Dorsolateral prefrontal cortex (tissue), 120 donors: ENCODE measurements at regions of chr17 and their contacts with region 1.

Region 1: DNA sequence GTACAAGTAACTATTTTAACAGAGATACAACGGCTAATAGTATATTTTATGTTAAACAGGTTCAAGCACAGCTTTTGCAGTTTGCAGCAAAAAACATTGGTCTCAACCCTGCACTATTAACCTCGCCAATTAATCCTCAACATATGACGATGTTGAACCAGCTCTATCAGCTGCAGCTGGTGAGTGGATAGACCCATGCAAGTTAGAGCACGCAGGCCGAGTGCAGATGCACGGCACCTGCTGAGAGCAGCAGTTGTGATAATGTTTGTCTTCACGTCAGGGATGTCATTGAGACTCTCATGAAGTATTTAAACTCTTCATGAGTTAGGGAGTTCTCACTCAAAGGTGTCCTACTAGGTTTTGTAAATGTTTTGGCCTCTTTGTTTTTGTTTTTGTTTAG is 45.6 kb downstream of the TMC6 start:
- DNase-seq: no peak
- H3K4me3 ChIP-seq: peak overlapping the region in 6 of 59 donors; percentile 2 to 23 (median 9)
- H3K27ac ChIP-seq: peak overlapping the region; percentile 7 to 96 (median 90)
- H3K27me3 ChIP-seq: no peaks in the 10 kb centered on the region
- CTCF ChIP-seq: peak in 2 of 56 donors; percentile 0 to 5

Region 2: GRCh38 chr17:77935121-77935571 is 147.8 kb before region 1 on chr17:
- intact Hi-C with region 1: no loop called
- DNase-seq: no peak
- H3K4me3 ChIP-seq: no peak overlapping the region
- H3K27ac ChIP-seq: no peak overlapping the region
- H3K27me3 ChIP-seq: no peaks in the 10 kb centered on the region
- CTCF ChIP-seq: no peak

Region 3: GRCh38 chr17:78040440-78041385 is 42.3 kb before region 1 on chr17:
- intact Hi-C with region 1: loop called (anchors 2 kb)
- DNase-seq: peak; percentile 63 to 81 (median 75)
- H3K4me3 ChIP-seq: peak overlapping the region; percentile 31 to 73 (median 61)
- H3K27ac ChIP-seq: peak overlapping the region; percentile 90 to 100 (median 99)
- H3K27me3 ChIP-seq: no peaks in the 10 kb centered on the region
- CTCF ChIP-seq: peak in 28 of 56 donors; percentile 3 to 49 (median 20)